Activated naive CD4-positive, alpha-beta T cell treated with anti-CD3 and anti-CD28 coated beads for 36 hours (primary cell): ENCODE measurements at regions of chr17 and their contacts with region 1.

Region 1: GRCh38 chr17:42517516-42517915 is 18.5 kb upstream of the NAGLU start:
- DNase-seq: peak; percentile 89
- H3K4me3 Mint-ChIP-seq: no peak overlapping the region
- H3K27ac Mint-ChIP-seq: no peak overlapping the region
- H3K4me1 Mint-ChIP-seq: peaks cover 4% of the 10 kb centered on the region
- H3K27me3 Mint-ChIP-seq: no peaks in the 10 kb centered on the region

Region 2: GRCh38 chr17:42428141-42428944 is 89.2 kb before region 1 on chr17:
- CTCF ChIA-PET with region 1: interaction called, 8 read pairs
- intact Hi-C with region 1: loop called (anchors 1 kb)
- DNase-seq: peak; percentile 57
- H3K4me3 Mint-ChIP-seq: no peak overlapping the region
- H3K27ac Mint-ChIP-seq: no peak overlapping the region
- H3K4me1 Mint-ChIP-seq: peaks cover 4% of the 10 kb centered on the region
- H3K27me3 Mint-ChIP-seq: peaks cover 9% of the 10 kb centered on the region

Region 3: DNA sequence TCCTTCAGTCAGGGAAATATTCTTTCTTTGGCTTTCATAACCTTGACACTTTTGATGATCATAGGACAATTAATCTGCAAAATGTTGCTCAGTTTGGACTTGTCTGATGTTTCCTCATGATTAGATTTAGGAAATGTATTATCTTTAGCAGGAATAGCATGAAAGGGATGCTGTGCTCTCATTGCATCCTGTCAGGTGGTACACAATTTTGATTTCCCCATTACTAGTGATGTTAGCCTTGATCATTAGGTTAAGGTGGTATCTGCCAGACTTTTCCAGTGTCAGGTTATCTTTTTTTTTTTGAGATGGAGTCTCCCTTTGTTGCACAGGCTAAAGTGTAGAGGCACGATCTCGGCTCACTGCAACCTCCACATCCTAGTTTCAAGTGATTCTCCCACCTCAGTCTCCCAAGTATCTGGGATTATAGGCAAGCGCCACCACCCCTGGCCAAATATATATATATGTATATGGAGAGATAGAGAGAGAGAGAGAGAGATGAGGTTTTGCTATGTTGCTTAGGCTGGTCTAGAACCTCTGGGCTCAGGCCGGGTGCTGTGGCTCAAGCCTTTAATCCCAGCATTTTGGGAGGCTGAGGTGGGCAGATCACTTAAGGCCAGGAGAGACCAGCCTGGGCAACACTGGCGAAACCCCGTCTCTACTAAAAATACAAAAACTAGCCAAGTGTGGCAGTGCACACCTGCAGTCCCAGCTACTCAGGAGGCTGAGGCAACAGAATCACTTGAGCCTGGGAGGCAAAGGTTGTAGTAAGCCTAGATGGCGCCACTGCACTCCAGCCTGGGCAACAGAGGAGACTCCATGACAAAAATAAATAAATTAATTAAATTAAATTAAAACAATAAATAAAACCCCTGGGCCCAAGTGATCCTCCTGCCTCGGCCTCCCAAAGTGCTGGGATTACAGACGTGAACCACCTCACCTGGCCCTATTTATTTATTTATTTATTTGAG is 78.6 kb before region 1 on chr17:
- CTCF ChIA-PET with region 1: interaction called, 14 read pairs
- intact Hi-C with region 1: loop called (anchors 1 kb)
- DNase-seq: peak; percentile 74
- H3K4me3 Mint-ChIP-seq: no peak overlapping the region
- H3K27ac Mint-ChIP-seq: no peak overlapping the region
- H3K4me1 Mint-ChIP-seq: peaks cover 6% of the 10 kb centered on the region
- H3K27me3 Mint-ChIP-seq: no peaks in the 10 kb centered on the region